Activated CD4-positive, alpha-beta memory T cell treated with anti-CD3 and anti-CD28 coated beads for 36 hours (primary cell): ENCODE measurements at regions of chr1 and their contacts with region 1.

Region 1: DNA sequence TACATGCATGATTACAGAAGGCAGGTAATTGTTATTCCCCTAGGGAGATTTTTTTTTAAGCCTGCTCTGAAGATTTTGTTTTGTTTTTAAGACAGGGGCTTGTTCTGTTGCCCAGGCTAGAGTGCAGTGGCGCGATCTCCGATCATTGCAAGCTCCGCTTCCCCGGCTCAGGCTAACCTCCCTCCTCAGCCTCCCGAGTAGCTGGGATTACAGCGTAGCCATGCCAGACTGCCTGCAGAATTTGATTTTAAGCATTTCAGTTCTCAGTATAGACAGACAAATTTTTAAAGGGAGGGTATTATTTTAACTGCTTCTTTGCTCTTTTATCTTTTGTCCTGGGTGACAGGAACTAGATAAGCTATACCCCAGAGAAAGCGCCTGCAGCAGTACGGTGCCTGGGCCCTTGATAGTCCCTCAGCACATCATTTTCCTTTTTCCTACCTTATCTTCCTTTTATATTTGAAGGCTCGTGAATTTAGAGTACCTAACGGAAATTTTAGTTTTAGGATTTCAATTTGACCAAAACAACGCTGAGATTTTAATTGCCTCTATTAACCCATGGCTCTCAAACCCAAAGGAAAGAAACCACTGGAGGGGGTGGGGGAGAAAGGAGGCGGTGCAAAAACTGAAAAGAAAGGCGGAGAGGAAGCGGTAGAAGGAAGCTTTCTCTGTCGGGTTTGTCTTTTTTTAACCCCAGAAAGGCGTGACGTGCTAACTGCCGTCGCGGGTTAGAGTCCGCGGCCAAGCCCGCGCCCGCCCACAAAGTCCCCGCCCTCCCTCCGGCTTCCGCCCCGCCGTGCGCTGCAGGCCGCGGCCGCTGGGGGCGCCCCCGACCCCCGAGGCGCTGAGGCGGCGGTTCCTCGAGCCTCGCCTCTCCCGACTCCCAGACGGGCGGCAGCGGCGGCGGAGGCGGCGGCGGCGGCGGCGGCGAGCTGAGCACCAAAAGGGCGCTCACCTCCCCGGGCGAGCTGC is at the start of gene EEIG2:
- DNase-seq: peak; percentile 93
- H3K4me3 Mint-ChIP-seq: peak within 1 kb of the TSS; percentile 88
- H3K27ac Mint-ChIP-seq: peak within 1 kb of the TSS; percentile 65
- H3K4me1 Mint-ChIP-seq: peaks cover 36% of the 10 kb centered on the region
- H3K27me3 Mint-ChIP-seq: no peaks in the 10 kb centered on the region
- total RNA-seq, gene EEIG2: 8.4 to 8.7 TPM

Region 2: GRCh38 chr1:107936498-107937481 is 622.7 kb before region 1 on chr1:
- CTCF ChIA-PET with region 1: no interaction called
- POLR2A ChIA-PET with region 1: no interaction called
- intact Hi-C with region 1: loop called (anchors 10 kb)
- DNase-seq: peak; percentile 72
- H3K4me3 Mint-ChIP-seq: peak overlapping the region; percentile 49
- H3K27ac Mint-ChIP-seq: peak overlapping the region; percentile 64
- H3K4me1 Mint-ChIP-seq: peaks cover 44% of the 10 kb centered on the region
- H3K27me3 Mint-ChIP-seq: no peaks in the 10 kb centered on the region

Region 3: GRCh38 chr1:108512239-108512981 is 47.1 kb before region 1 on chr1:
- CTCF ChIA-PET with region 1: interaction called, 172 read pairs
- POLR2A ChIA-PET with region 1: interaction called, 3 read pairs
- intact Hi-C with region 1: loop called (anchors 1 kb)
- DNase-seq: no peak
- H3K4me3 Mint-ChIP-seq: no peak overlapping the region
- H3K27ac Mint-ChIP-seq: no peak overlapping the region
- H3K4me1 Mint-ChIP-seq: no peaks in the 10 kb centered on the region
- H3K27me3 Mint-ChIP-seq: peaks cover 11% of the 10 kb centered on the region

Region 4: DNA sequence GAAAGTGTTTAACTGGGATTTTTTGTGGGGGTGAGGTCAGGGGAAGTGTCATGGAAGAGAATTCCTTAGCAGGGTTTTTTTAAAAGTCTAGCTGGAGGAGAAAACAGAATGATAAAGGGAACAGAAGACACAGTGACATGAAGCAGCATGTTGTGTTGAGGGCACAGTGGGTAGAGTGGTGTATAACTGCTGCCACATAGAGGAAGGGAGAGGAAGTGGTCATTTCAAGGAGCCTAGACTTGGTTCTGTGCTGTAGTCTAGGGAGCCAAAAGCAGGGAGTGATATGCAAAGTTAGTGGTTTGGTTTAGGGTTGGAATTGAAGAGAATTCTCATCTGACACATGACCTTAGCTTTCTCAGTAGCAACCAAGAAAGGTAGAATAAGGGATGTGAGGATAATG is 10.6 kb after region 1 on chr1:
- CTCF ChIA-PET with region 1: interaction called, 30 read pairs
- POLR2A ChIA-PET with region 1: no interaction called
- intact Hi-C with region 1: no loop called
- DNase-seq: peak; percentile 37
- H3K4me3 Mint-ChIP-seq: no peak overlapping the region
- H3K27ac Mint-ChIP-seq: no peak overlapping the region
- H3K4me1 Mint-ChIP-seq: no peaks in the 10 kb centered on the region
- H3K27me3 Mint-ChIP-seq: no peaks in the 10 kb centered on the region

Region 5: DNA sequence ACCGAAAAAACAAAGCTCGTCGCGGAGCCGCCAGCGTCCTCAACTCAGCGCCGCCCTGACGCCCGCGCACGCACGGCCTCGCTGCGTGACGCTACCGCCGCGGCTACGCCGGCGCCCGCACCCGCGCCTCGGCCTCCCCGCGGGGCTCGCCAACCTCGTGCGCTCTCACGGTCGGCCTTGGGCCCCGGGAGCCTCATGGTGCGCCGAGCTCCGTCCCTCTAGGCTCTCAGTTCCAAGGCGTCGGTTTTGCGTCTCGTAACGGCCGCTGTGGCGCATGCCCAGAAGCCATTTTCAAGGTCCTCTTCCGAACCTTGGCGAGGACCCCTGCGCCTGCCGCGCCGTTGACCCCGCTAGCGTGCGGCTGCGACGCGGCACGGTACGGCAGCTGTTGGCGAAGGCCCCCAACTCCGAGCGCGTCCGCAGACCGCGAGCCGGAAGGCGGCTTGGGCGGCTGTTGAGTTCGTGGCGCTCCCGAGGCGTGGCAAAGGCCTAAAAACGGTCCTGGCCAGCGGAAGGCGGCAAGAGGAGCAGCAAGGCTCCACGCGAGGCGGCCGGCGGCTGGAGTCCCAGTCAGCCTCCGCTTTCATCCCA is 101.6 kb after region 1 on chr1 and contains the start of gene HENMT1:
- CTCF ChIA-PET with region 1: interaction called, 6 read pairs
- POLR2A ChIA-PET with region 1: interaction called, 8 read pairs
- intact Hi-C with region 1: loop called (anchors 1 kb)
- DNase-seq: peak; percentile 86
- H3K4me3 Mint-ChIP-seq: peak within 1 kb of the TSS; percentile 82
- H3K27ac Mint-ChIP-seq: peak within 1 kb of the TSS; percentile 94
- H3K4me1 Mint-ChIP-seq: peaks cover 37% of the 10 kb centered on the region
- H3K27me3 Mint-ChIP-seq: no peaks in the 10 kb centered on the region
- total RNA-seq, gene HENMT1: 25.6 to 25.8 TPM

Region 6: DNA sequence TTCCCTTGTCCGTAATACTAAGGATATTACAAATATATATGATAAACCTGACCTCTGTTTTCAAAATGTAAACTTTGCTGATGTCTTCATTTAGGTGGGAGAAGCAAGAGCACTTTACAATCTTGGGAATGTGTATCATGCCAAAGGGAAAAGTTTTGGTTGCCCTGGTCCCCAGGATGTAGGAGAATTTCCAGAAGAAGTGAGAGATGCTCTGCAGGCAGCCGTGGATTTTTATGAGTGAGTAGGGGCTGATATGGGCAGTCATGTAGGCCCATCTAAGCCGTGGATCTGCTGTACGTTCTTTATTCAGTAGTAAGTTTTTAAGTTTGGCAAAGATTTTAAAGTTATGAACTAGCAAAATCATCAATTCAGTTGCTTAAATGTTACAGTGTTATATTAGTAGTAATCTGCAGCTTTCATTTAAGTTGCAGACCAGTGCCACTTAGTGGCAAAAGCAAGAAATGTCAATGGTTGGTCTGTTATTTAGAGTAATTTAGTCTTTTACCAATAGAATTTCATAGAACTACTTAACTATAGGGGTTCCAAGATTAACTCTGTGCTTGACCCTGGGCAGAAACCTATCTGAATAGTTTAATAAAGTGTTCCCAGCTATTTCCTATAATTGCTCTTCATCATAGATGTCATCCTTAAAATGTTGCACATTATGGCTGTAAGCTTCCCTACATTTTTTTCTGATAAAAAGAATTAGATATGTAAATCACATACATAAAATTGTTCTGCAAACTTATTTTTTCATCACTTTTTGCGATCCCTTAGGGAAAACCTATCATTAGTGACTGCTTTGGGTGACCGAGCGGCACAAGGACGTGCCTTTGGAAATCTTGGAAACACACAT is 338.6 kb after region 1 on chr1:
- CTCF ChIA-PET with region 1: interaction called, 3 read pairs
- POLR2A ChIA-PET with region 1: no interaction called
- intact Hi-C with region 1: loop called (anchors 1 kb)
- DNase-seq: no peak
- H3K4me3 Mint-ChIP-seq: no peak overlapping the region
- H3K27ac Mint-ChIP-seq: no peak overlapping the region
- H3K4me1 Mint-ChIP-seq: no peaks in the 10 kb centered on the region
- H3K27me3 Mint-ChIP-seq: no peaks in the 10 kb centered on the region